BJ (cell line): ENCODE measurements at regions of chr1 and their contacts with region 1.

Region 1: DNA sequence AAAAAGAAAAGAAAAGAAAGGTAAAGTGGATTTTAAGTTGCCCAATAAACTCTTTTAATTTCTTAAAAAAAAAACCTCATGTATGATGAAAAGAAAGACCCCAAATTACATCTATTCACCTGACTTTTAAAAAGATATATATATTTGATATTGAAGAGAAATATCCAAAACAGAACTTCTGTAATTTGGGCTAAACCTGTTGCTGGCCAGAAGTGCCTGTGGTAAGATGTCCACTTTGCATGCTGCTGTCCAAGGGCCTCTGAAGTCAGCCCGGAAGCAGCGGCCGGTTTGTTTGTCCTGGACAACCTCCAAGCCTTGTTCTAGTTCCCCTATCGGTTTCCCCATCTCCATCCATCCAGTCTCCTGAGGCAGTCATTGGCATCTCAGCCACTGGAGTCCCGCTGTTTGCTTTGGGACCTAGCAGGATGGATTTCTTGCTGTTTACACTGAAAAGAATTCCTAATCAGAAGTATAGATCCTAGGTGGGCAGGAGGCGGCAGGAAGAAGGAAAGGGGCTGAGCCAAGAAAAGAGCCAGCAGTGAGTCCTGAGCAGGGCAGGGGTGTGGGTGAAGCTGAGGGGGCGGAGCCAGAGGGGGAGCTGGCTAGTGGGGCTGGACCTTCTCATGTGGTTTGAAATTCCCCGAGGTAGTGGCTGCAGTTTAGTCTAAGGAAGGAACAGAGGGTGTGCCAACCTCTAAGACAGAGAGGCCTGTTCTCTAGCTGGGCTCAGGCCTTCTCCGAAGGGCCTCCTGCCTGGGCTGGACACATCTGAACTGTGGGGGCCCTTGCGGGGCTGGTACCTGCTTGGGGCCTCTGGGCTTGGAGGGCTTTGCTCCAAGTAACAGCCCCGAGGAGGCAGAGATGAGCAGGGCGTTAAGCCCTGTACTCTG is 3.3 kb downstream of the NCMAP start:
- DNase-seq: peak; percentile 24
- H3K4me3 ChIP-seq: no peak overlapping the region
- H3K27me3 ChIP-seq: peaks cover 31% of the 10 kb centered on the region
- CTCF ChIP-seq: no peak

Region 2: DNA sequence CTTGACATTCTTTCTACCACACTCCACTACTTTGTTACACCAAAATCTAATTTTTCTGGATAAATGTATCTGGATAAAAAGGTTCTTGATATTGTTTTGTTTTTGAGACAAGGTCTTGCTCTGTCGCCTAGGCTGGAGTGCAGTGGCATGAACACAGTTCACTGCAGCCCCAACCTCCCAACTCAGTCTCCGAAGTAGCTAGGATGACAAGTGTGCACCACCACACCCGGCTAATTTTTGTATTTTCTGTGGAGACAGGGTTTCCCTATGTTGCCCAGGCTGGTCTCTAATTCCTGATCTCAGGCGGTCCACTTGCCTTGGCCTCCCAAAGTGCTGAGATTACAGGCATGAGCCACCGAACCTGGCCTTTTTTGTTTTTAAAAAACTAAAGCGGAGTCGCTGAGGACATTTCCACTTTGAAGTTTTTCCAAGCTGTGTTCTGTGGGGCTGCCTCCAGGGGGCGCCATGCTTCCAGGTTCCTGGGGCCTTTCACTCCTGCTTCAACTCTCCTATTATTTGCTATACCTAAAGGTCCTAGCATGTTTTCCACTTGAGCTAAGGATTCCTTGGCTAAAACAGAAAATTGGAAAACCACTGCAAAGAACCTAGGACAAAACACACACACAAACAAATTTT is 17.3 kb before region 1 on chr1:
- CTCF ChIA-PET with region 1: interaction called, 14 read pairs
- POLR2A ChIA-PET with region 1: no interaction called
- DNase-seq: no peak
- H3K4me3 ChIP-seq: no peak overlapping the region
- H3K27me3 ChIP-seq: no peaks in the 10 kb centered on the region
- CTCF ChIP-seq: peak; percentile 56

Region 3: GRCh38 chr1:24548070-24548469 is 11.1 kb before region 1 on chr1:
- CTCF ChIA-PET with region 1: interaction called, 11 read pairs
- POLR2A ChIA-PET with region 1: no interaction called
- DNase-seq: no peak
- H3K4me3 ChIP-seq: no peak overlapping the region
- H3K27me3 ChIP-seq: no peaks in the 10 kb centered on the region
- CTCF ChIP-seq: no peak